ENCODE measurements at regions of chr13 and their contacts with region 1.

Region 1: DNA sequence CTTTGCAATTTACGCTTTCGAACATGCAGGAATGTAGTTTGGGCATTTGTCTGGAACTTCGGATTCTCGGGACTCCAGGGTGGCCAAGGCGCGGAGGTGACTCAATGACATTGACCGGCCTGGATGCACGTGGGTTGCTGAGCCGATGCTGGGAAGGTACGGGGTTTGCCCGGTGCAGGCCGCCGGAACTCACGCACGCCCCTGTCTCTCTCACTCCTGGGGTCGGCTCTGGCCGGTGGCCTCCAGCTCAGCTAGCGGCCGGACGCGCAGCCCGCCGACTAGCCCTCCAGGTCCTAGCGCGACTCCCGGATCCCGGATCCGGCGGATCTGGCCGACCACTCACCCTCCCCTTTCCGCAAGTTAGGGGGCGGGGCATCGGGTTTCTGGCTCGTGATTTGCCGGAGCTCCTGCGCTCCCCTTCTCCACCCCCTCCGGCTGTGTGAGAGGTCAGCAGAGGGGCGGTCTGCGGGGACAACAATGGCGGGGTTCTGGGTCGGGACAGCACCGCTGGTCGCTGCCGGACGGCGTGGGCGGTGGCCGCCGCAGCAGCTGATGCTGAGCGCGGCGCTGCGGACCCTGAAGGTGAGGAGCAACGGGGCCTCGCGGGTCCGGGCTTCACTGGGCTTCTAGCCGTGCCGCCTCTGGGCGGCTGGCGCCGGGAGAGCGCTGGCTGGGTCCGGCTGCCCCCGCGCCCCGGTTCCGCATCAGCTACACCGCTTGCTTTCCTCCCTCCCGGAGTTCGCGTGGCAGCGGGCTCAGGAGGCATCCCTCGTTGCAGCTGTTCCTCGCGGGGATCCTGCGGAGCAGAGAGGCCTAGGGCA is at the start of gene PCCA:
- DNase-seq: peak; percentile 33 to 84 (median 66)
- ATAC-seq: peak; percentile 64
- H3K4me3 ChIP-seq: peak within 1 kb of the TSS; percentile 89
- H3K4me3 Mint-ChIP-seq: peak within 1 kb of the TSS; percentile 99
- H3K27ac ChIP-seq: no peak within 1 kb of the TSS
- H3K27ac Mint-ChIP-seq: peak within 1 kb of the TSS; percentile 73
- H3K4me1 ChIP-seq: peaks cover 16% of the 10 kb centered on the region
- H3K4me1 Mint-ChIP-seq: peaks cover 37% of the 10 kb centered on the region
- H3K27me3 ChIP-seq: no peaks in the 10 kb centered on the region
- H3K27me3 Mint-ChIP-seq: no peaks in the 10 kb centered on the region
- CTCF ChIP-seq: no peak
- total RNA-seq, gene PCCA: 4.7 to 5.2 TPM

Region 2: GRCh38 chr13:100069278-100069677 is 19.6 kb before region 1 on chr13:
- CTCF ChIA-PET with region 1: no interaction called
- POLR2A ChIA-PET with region 1: no interaction called
- intact Hi-C with region 1: loop called in 1 of 2 experiments (anchors 2 kb)
- DNase-seq: no peak
- ATAC-seq: no peak
- H3K4me3 ChIP-seq: no peak overlapping the region
- H3K4me3 Mint-ChIP-seq: no peak overlapping the region
- H3K27ac ChIP-seq: no peak overlapping the region
- H3K27ac Mint-ChIP-seq: no peak overlapping the region
- H3K4me1 ChIP-seq: no peaks in the 10 kb centered on the region
- H3K4me1 Mint-ChIP-seq: no peaks in the 10 kb centered on the region
- H3K27me3 ChIP-seq: no peaks in the 10 kb centered on the region
- H3K27me3 Mint-ChIP-seq: peaks cover 7% of the 10 kb centered on the region
- CTCF ChIP-seq: no peak

Region 3: GRCh38 chr13:100075700-100076587 is 12.9 kb before region 1 on chr13:
- CTCF ChIA-PET with region 1: no interaction called
- POLR2A ChIA-PET with region 1: interaction called, 4 read pairs
- intact Hi-C with region 1: loop called (anchors 1 kb)
- DNase-seq: no peak
- ATAC-seq: no peak
- H3K4me3 ChIP-seq: no peak overlapping the region
- H3K4me3 Mint-ChIP-seq: no peak overlapping the region
- H3K27ac ChIP-seq: no peak overlapping the region
- H3K27ac Mint-ChIP-seq: no peak overlapping the region
- H3K4me1 ChIP-seq: no peaks in the 10 kb centered on the region
- H3K4me1 Mint-ChIP-seq: no peaks in the 10 kb centered on the region
- H3K27me3 ChIP-seq: no peaks in the 10 kb centered on the region
- H3K27me3 Mint-ChIP-seq: no peaks in the 10 kb centered on the region
- CTCF ChIP-seq: no peak

Region 4: GRCh38 chr13:100176801-100177400 is 88.0 kb after region 1 on chr13:
- CTCF ChIA-PET with region 1: no interaction called
- POLR2A ChIA-PET with region 1: no interaction called
- intact Hi-C with region 1: no loop called
- DNase-seq: no peak
- ATAC-seq: no peak
- H3K4me3 ChIP-seq: no peak overlapping the region
- H3K4me3 Mint-ChIP-seq: no peak overlapping the region
- H3K27ac ChIP-seq: no peak overlapping the region
- H3K27ac Mint-ChIP-seq: no peak overlapping the region
- H3K4me1 ChIP-seq: no peaks in the 10 kb centered on the region
- H3K4me1 Mint-ChIP-seq: no peaks in the 10 kb centered on the region
- H3K27me3 ChIP-seq: no peaks in the 10 kb centered on the region
- H3K27me3 Mint-ChIP-seq: no peaks in the 10 kb centered on the region
- CTCF ChIP-seq: no peak